ENCODE measurements at regions of chr9 and their contacts with region 1.

Region 1: GRCh38 chr9:12566404-12567090 is 126.6 kb upstream of the TYRP1 start:
- DNase-seq: no peak
- ATAC-seq: no peak
- H3K4me3 ChIP-seq: no peak overlapping the region
- H3K4me3 Mint-ChIP-seq: no peak overlapping the region
- H3K27ac ChIP-seq: no peak overlapping the region
- H3K27ac Mint-ChIP-seq: no peak overlapping the region
- H3K4me1 ChIP-seq: no peaks in the 10 kb centered on the region
- H3K4me1 Mint-ChIP-seq: no peaks in the 10 kb centered on the region
- H3K27me3 ChIP-seq: no peaks in the 10 kb centered on the region
- H3K27me3 Mint-ChIP-seq: no peaks in the 10 kb centered on the region
- CTCF ChIP-seq: no peak

Region 2: GRCh38 chr9:12516573-12516972 is 50.0 kb before region 1 on chr9:
- CTCF ChIA-PET with region 1: no interaction called
- POLR2A ChIA-PET with region 1: no interaction called
- intact Hi-C with region 1: loop called in 1 of 2 experiments (anchors 10 kb)
- DNase-seq: no peak
- ATAC-seq: no peak
- H3K4me3 ChIP-seq: no peak overlapping the region
- H3K4me3 Mint-ChIP-seq: no peak overlapping the region
- H3K27ac ChIP-seq: no peak overlapping the region
- H3K27ac Mint-ChIP-seq: no peak overlapping the region
- H3K4me1 ChIP-seq: no peaks in the 10 kb centered on the region
- H3K4me1 Mint-ChIP-seq: no peaks in the 10 kb centered on the region
- H3K27me3 ChIP-seq: no peaks in the 10 kb centered on the region
- H3K27me3 Mint-ChIP-seq: no peaks in the 10 kb centered on the region
- CTCF ChIP-seq: no peak

Region 3: DNA sequence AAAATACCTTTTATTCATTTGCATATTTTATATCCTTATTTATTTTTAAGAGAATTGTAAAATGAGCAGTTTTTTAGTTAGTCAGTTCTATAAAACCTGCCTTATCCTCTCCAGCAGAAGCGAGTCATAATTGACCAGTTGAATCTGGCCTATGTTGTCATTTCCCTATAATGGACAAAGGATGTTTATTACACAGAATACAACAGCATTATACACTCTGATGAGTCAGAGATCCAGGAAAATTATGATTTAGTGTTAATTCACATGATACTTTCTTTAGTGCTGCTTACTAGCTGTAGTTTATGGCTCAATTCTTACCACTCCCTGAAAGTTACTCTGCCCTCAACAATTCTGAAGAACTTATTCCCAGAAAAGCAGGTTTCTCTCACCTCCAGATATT is 181.5 kb after region 1 on chr9:
- CTCF ChIA-PET with region 1: no interaction called
- POLR2A ChIA-PET with region 1: no interaction called
- intact Hi-C with region 1: no loop called
- DNase-seq: no peak
- ATAC-seq: no peak
- H3K4me3 ChIP-seq: no peak overlapping the region
- H3K4me3 Mint-ChIP-seq: no peak overlapping the region
- H3K27ac ChIP-seq: no peak overlapping the region
- H3K27ac Mint-ChIP-seq: no peak overlapping the region
- H3K4me1 ChIP-seq: no peaks in the 10 kb centered on the region
- H3K4me1 Mint-ChIP-seq: no peaks in the 10 kb centered on the region
- H3K27me3 ChIP-seq: no peaks in the 10 kb centered on the region
- H3K27me3 Mint-ChIP-seq: no peaks in the 10 kb centered on the region
- CTCF ChIP-seq: no peak

Measured in CD4-positive, alpha-beta T cell (primary cell).